Right cardiac atrium (tissue), 5 donors: ENCODE measurements at regions of chr17 and their contacts with region 1.

Region 1: DNA sequence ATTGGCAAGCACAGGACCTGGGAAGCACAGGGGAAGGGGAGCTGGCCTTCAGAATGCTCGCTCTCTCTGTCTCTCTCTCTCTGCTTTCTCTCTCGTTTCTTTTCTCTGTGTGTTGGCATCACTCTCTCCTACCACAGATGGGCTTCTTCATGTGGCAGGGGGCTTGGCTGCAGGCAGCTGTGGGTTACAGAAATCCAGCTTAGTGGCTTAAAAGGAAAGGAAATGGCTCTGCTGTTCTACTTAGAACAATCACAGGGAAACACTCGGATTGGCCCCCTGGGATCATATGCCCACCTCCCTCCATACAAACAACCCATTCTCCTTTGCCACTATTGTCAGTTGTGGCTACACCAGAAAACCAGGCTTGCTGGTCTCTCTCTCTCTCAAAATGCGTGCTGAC is 20.4 kb downstream of the TBX2 start:
- DNase-seq: no peak
- ATAC-seq: no peak
- H3K4me3 ChIP-seq: no peak overlapping the region
- H3K27ac ChIP-seq: no peak overlapping the region
- H3K4me1 ChIP-seq: no peaks in the 10 kb centered on the region
- H3K27me3 ChIP-seq: no peaks in the 10 kb centered on the region

Region 2: DNA sequence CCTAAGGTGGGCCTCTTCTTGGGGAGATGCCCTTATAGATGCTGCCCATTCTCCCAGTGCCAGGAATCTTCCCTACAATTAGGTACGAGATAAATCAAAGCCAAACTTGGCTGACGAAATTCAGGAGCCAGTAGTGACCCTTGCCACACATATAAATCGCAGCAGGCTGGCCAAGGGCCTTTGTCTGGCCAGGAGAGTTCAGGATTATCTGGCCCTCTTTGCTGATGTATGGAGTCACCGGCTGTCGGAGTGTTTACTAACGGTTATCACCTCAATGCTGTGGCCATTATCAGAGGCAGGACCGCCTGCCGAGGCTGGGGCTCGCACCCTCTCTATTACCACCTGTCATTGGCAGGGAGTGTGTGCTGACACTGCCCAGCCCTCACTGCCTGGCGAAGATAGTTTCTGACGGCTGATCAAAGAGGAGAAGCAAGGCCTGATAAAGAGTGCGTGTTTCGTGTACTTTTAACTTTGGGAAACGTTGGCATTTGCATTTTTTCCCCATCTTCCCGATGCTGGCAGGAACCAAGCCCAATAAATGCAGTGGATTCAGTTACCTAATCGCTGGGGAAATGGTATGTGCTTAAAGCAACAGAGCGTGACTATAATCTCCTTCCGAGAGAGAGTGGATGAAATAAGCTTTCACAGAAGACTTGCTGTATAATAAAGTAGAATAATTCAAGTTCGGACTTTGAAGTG is 53.2 kb before region 1 on chr17:
- intact Hi-C with region 1: no loop called
- DNase-seq: peak; percentile 65 to 86 (median 83)
- ATAC-seq: peak; percentile 95
- H3K4me3 ChIP-seq: no peak overlapping the region
- H3K27ac ChIP-seq: no peak overlapping the region
- H3K4me1 ChIP-seq: no peaks in the 10 kb centered on the region
- H3K27me3 ChIP-seq: no peaks in the 10 kb centered on the region

Region 3: DNA sequence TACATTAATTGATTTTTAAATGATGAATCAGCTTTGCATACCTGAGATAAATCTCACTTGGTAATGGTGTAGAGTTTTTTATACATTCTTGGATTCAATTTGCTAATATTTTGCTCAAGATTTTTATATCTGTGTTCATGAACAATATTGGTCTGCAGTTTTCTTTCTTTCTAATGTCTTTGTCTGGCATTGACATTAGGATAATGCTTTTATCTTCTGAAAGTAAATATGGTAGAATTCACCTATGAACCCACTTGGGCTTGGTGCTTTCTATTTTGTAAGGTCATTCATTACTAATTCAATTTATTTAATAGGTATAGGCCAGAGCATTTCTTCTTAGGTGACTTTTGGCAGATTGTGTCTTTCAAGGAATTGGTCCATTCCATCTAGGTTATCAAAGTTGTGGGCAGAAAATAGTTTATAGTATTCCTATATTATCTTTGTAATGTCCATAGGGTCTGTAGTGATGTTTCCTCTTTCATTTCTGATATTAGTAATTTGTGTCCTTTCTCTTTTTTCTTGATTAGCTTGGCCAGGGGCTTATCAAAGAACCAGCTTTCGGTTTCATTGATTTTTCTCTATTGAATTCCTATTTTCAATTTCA is 125.4 kb after region 1 on chr17:
- intact Hi-C with region 1: loop called in 3 of 4 experiments (anchors 5 to 10 kb)
- DNase-seq: no peak
- ATAC-seq: no peak
- H3K4me3 ChIP-seq: no peak overlapping the region
- H3K27ac ChIP-seq: no peak overlapping the region
- H3K4me1 ChIP-seq: no peaks in the 10 kb centered on the region
- H3K27me3 ChIP-seq: no peaks in the 10 kb centered on the region

Region 4: DNA sequence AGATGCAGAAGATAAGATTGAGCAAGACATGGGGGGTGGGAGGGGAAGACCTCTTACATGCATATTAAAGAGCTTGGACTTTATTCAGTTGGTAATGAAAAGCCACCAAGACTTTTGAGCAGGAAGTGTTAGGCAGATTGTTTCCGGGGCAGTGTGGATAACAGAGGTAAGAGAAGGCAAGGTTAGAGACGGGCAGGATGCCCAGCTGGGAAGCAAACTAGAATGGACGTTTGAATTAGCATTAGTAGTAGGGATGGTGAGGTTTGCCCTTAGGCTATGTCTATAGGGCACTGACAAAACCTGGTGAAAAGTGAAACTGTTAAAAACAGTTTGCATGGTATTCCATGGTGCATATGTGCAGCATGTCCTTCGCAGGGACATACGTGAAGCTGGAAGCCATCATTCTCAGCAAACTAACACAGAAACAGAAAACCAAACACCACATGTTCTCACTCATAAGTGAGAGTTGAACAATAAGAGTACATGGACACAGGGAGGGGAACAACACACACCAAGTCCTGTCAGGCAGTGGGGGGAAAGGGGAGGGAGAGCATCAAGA is 145.1 kb after region 1 on chr17:
- intact Hi-C with region 1: no loop called
- DNase-seq: no peak
- ATAC-seq: no peak
- H3K4me3 ChIP-seq: no peak overlapping the region
- H3K27ac ChIP-seq: no peak overlapping the region
- H3K4me1 ChIP-seq: no peaks in the 10 kb centered on the region
- H3K27me3 ChIP-seq: no peaks in the 10 kb centered on the region